Motor neuron (in vitro differentiated cells): ENCODE measurements at regions of chr10 and their contacts with region 1.

Region 1: GRCh38 chr10:60816628-60817397 is 38.5 kb downstream of the CDK1 start:
- ATAC-seq: peak; percentile 91 to 97 (median 92)
- H3K4me3 ChIP-seq: no peak overlapping the region
- H3K27ac ChIP-seq: no peak overlapping the region
- H3K4me1 ChIP-seq: peaks cover 2 to 5% of the 10 kb centered on the region in 2 donors

Region 2: DNA sequence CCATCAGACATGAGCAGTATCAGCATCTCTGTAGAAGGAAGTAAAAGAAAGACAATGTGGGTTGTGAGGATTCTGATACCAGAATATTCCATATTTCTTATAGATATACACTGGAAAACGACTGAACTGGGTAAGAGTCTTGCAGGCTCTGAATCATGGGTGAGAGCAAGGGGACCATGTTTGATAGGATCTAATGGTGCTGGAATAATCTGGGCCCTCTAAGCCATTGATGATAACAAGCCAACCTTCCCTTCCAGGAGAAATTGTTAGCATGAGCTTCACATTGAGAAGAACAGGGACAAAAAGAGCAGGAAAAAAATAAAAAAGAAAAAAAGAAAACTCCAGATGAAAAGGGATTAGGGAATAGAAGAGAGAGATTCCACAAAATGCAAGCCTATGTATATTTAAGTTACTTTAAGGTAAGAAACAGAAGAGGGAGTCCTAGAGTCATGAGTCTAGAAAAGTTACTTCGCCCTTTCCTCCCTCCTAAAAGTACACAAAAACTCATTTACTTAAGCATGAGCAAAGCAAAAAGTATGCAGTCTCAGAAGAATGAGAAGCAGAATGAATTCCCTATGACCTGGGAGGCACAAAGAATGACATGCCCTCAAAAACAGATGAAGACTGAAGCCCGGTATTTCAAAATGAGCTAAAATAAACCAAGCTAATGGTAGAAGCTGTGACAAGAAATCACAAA is 454.5 kb after region 1 on chr10:
- in situ Hi-C with region 1: loop called in 5 of 9 experiments (anchors 25 kb)
- ATAC-seq: peak in 4 of 8 experiments; percentile 36 to 92 (median 80)
- H3K4me3 ChIP-seq: no peak overlapping the region
- H3K27ac ChIP-seq: no peak overlapping the region
- H3K4me1 ChIP-seq: no peaks in the 10 kb centered on the region

Region 3: DNA sequence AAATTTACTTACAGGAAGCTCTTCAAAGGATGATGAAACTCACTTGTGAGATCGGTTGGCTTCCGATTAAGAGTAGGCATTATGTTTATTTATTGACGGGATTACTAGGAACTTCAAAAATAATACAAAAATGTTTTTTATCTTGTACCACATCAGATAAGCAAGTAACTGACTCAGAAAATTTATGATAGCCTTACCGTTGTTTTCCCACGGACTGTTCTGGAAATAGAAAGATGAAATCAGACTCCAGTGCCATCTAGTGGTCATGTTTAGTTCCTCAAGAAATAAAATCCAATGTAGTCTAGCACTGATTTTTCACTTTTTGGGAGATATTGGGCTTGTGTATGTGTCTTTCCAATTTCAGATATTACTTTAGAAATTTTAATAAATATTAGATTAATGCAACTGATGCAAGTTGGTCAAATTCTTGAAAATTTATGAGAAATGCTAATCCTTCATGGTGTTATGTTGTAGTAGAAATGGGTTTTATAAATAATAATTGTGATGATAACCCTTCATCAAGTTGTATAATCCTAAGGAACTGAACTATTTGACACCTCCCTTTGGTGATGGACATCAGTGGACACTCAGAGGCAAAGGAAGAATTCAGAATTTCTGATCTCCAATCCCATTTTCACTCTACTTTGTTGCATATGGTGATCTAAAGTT is 467.5 kb after region 1 on chr10:
- in situ Hi-C with region 1: loop called in 5 of 9 experiments (anchors 10 to 25 kb)
- ATAC-seq: peak in 4 of 8 experiments; percentile 39 to 60 (median 44)
- H3K4me3 ChIP-seq: no peak overlapping the region
- H3K27ac ChIP-seq: no peak overlapping the region
- H3K4me1 ChIP-seq: no peaks in the 10 kb centered on the region

Region 4: DNA sequence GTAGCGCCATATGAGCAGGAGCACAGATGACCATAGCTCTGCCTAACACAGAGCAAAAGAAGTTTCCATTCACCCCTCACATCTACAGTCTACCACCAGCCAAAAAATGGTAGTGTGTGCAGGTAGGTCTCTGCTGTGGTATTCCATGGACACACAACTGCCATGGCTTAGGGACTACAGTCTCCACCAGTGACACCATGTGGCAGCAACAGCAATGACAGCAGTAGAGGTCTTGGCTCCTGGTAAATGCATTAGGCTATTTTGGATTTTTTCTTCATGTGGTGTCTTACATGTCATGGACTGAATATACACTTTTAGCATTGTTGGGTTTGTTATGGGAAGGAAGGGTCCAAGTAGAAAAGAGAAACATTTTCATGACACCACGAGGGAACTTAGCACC is 775.8 kb after region 1 on chr10:
- in situ Hi-C with region 1: loop called in 1 of 9 experiments (anchors 25 kb)
- ATAC-seq: peak in 3 of 8 experiments; percentile 37 to 74 (median 68)
- H3K4me3 ChIP-seq: no peak overlapping the region
- H3K27ac ChIP-seq: no peak overlapping the region
- H3K4me1 ChIP-seq: peaks cover 13 to 42% of the 10 kb centered on the region in 2 donors

Region 5: GRCh38 chr10:61733358-61733940 is 916.6 kb after region 1 on chr10:
- in situ Hi-C with region 1: loop called in 1 of 9 experiments (anchors 25 kb)
- ATAC-seq: peak in 2 of 8 experiments; percentile 27 to 33
- H3K4me3 ChIP-seq: no peak overlapping the region
- H3K27ac ChIP-seq: no peak overlapping the region
- H3K4me1 ChIP-seq: no peaks in the 10 kb centered on the region

Region 6: GRCh38 chr10:62244780-62245467 is 1428.1 kb after region 1 on chr10:
- in situ Hi-C with region 1: loop called in 1 of 9 experiments (anchors 25 kb)
- ATAC-seq: peak; percentile 62 to 88 (median 72)
- H3K4me3 ChIP-seq: no peak overlapping the region
- H3K27ac ChIP-seq: no peak overlapping the region
- H3K4me1 ChIP-seq: peaks cover 0 to 4% of the 10 kb centered on the region in 2 donors